ENCODE measurements at regions of chr6 and their contacts with region 1.

Region 1: DNA sequence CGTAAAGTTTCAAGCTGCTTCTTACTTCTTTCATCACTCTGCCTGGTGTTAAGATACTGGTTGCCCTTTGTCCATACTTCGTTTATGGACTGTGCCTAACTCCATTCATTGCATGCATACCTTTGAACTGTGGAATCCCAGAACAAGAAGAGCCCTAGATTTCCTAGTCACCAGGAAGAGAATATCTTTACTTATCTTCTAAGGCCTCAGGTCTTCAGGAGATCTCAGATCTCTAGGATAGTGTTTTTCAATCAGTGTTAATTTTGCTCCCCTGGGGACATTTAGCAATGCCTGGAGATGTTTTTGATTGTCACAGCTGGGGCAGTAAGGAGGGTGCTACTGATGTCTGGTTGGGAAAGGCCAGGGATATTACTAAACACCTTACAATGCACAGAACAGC is 35.5 kb upstream of the GJA1 start:
- DNase-seq: peak; percentile 45 to 59
- H3K4me3 ChIP-seq: no peak overlapping the region
- H3K4me3 Mint-ChIP-seq: peak overlapping the region; percentile 43
- H3K27ac Mint-ChIP-seq: peak overlapping the region; percentile 92
- H3K4me1 ChIP-seq: peaks cover 17% of the 10 kb centered on the region
- H3K4me1 Mint-ChIP-seq: peaks cover 17% of the 10 kb centered on the region
- H3K27me3 ChIP-seq: no peaks in the 10 kb centered on the region
- H3K27me3 Mint-ChIP-seq: no peaks in the 10 kb centered on the region
- CTCF ChIP-seq: no peak

Region 2: DNA sequence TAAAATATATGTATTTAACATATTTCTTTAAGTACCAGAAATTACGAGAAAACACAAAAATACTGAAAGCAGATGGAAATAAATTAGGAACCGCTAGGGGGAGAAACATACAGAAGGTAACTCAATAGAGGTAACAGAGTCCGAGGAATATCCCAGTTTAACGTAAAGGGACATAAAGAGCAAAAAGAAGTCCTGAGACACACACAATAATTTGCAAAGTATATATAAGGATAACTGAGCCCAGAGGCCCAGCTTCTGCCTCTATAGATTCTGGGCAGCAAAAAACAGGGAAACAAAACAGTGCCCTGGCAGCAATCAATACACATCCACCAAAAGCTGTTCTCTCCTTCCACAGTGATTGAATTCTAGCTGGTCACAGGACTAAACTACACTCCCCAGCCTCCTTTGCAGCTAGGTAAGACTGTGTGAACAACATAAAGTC is 80.8 kb before region 1 on chr6:
- CTCF ChIA-PET with region 1: interaction called, 14 read pairs
- POLR2A ChIA-PET with region 1: no interaction called
- intact Hi-C with region 1: loop called (anchors 1 kb)
- DNase-seq: peak in 1 of 2 experiments; percentile 26
- H3K4me3 ChIP-seq: no peak overlapping the region
- H3K4me3 Mint-ChIP-seq: peak overlapping the region; percentile 28
- H3K27ac Mint-ChIP-seq: no peak overlapping the region
- H3K4me1 ChIP-seq: no peaks in the 10 kb centered on the region
- H3K4me1 Mint-ChIP-seq: no peaks in the 10 kb centered on the region
- H3K27me3 ChIP-seq: no peaks in the 10 kb centered on the region
- H3K27me3 Mint-ChIP-seq: no peaks in the 10 kb centered on the region
- CTCF ChIP-seq: peak; percentile 54 to 57

Region 3: DNA sequence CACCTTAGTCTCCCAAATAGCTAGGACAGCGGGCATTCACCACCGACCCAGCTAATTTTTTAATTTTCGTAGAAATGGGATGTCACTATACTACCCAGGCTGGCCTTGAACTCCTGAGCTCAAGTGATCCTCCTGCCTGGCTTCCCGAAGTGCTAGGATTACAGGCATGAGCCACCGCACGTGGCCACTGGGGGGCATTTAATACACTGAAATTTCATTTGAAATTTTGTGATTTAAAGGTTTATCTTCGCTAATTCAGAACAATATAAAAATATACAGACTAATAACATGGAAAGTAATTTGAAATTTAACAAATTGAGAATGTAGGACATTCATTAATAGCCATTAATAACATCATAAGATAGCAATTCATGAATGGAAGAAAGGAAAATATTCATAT is 45.2 kb before region 1 on chr6:
- CTCF ChIA-PET with region 1: interaction called, 3 read pairs
- POLR2A ChIA-PET with region 1: no interaction called
- intact Hi-C with region 1: loop called (anchors 1 kb)
- DNase-seq: no peak
- H3K4me3 ChIP-seq: no peak overlapping the region
- H3K4me3 Mint-ChIP-seq: no peak overlapping the region
- H3K27ac Mint-ChIP-seq: no peak overlapping the region
- H3K4me1 ChIP-seq: no peaks in the 10 kb centered on the region
- H3K4me1 Mint-ChIP-seq: no peaks in the 10 kb centered on the region
- H3K27me3 ChIP-seq: no peaks in the 10 kb centered on the region
- H3K27me3 Mint-ChIP-seq: no peaks in the 10 kb centered on the region
- CTCF ChIP-seq: peak; percentile 4 to 31

Region 4: DNA sequence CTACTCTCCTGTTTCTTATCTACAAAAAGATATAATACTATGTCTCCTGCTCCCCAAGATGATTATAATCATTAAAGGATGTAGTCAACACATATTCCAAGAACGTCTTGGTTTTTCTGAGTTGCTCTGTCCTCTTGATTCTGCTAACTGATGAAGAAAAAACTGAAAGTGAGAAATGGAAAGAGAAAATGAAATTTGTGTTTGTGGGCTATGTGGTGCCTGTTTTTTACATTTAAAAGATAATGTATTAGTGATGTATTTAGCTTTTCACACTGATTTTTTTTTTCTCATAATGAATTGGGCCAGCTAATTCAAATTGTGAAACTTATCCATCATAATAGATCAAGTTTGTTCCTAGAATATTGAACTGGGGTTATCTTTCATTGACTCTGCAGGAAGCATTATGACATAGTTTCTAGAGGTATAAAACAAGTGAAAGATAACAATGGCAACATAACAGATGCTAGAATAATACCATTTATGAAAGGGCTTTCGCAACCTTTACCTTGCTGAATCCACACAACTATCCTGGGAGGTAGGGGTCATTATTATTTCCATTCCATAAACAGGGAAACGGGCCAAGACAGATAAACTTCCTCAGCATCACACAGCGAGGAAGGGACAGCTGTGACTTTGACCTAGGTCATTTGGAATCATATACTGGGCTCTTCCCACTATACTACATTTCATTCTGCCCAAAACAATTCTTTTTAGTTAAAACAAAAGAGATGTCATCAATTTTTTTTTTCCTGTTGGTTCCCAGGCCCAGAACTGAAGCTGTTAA is 372.2 kb after region 1 on chr6:
- CTCF ChIA-PET with region 1: no interaction called
- POLR2A ChIA-PET with region 1: no interaction called
- intact Hi-C with region 1: no loop called
- DNase-seq: no peak
- H3K4me3 ChIP-seq: no peak overlapping the region
- H3K4me3 Mint-ChIP-seq: no peak overlapping the region
- H3K27ac Mint-ChIP-seq: no peak overlapping the region
- H3K4me1 ChIP-seq: no peaks in the 10 kb centered on the region
- H3K4me1 Mint-ChIP-seq: no peaks in the 10 kb centered on the region
- H3K27me3 ChIP-seq: no peaks in the 10 kb centered on the region
- H3K27me3 Mint-ChIP-seq: no peaks in the 10 kb centered on the region
- CTCF ChIP-seq: no peak

Measured in Caco-2 (cell line).